ENCODE measurements at regions of chr17 and their contacts with region 1.

Region 1: DNA sequence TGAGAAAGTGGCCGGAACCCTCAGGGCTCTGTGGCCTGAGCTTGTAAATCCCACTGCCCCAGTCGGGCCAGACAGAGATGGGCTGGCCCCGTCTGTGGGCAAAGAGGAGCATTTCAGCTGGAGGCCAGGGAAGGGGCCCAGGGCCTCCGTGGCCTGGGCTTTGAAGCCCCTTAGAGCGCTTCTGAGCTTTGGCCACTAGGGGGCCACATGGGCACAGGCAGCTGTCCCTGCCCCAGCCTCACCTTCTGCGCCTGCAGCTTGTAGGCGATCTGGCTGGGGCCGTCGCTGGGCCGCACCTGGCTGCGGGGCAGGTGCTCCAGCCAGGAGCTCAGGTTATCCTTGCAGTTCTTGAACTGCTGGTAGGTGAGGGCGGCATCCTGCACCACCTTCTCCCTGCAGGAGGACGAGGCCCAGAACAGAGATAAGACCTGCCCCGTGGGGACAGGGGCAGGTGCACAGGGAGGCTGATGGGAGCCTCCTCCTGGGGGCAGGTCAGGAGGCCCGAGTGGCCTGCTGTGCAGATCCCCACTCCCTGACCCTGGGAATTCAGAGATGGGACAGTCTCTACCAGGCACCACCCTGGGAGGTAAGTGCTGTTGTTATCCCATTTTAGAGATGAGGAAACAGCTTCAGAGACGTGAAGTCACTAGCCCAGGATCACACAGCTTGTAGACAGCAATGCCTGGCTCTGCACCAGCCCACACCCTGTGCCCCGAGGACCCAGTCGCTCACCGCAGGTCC is 12.8 kb downstream of the EVPL start:
- DNase-seq: peak; percentile 62 to 85 (median 77)
- ATAC-seq: peak; percentile 96
- H3K4me3 ChIP-seq: no peak overlapping the region
- H3K4me3 Mint-ChIP-seq: peak overlapping the region in 3 of 10 donors; percentile 40 to 68 (median 49)
- H3K27ac ChIP-seq: no peak overlapping the region
- H3K27ac Mint-ChIP-seq: peak overlapping the region in 5 of 9 donors; percentile 33 to 62 (median 40)
- H3K4me1 ChIP-seq: peaks cover 3 to 5% of the 10 kb centered on the region in 2 donors
- H3K4me1 Mint-ChIP-seq: peaks cover 0 to 11% (median 8%) of the 10 kb centered on the region in 7 donors
- H3K27me3 ChIP-seq: no peaks in the 10 kb centered on the region
- H3K27me3 Mint-ChIP-seq: no peaks in the 10 kb centered on the region

Region 2: DNA sequence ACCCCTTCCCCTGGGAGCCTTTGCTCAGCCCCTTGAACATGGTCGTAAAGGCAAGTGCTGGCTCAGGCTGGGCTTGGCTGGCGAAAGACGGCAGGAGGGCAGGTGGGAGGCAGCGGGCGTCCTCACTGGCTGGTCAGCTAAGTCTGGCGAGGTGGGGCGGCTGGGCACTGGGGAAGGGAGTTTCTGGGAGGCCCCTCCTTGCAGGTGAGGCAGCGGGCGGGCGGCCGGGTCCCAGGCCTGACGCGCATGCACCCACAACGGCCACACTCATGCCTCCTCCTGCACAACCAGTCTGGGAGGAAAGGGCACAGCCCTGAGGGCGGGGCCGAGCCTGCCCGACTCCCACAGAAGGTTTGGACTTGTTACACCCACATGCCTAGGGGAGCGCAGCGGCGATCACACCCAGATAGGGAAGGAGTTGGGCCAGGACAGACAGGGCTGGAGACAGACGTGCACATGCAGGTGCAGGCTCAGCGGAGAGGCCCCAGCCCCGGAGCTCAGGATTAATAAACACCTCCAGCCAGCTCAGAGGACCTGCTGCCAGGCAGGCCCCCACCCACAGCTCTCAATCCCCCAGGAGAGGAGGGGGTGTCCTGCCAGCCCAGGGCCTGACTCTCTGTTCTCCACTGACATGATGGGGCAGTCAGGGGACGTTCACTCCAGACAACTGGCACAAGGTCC is 12.9 kb after region 1 on chr17 and contains the start of gene EVPL:
- CTCF ChIA-PET with region 1: interaction called, 12 read pairs
- POLR2A ChIA-PET with region 1: interaction called, 10 read pairs
- intact Hi-C with region 1: loop called in 1 of 2 experiments (anchors 1 kb)
- DNase-seq: no peak
- ATAC-seq: no peak
- H3K4me3 ChIP-seq: no peak within 1 kb of the TSS
- H3K4me3 Mint-ChIP-seq: peak within 1 kb of the TSS in 1 of 10 donors; percentile 84
- H3K27ac ChIP-seq: peak within 1 kb of the TSS; percentile 40
- H3K27ac Mint-ChIP-seq: peak within 1 kb of the TSS in 6 of 9 donors; percentile 25 to 97 (median 80)
- H3K4me1 ChIP-seq: peaks cover 8 to 23% of the 10 kb centered on the region in 2 donors
- H3K4me1 Mint-ChIP-seq: peaks cover 9 to 31% (median 26%) of the 10 kb centered on the region in 7 donors
- H3K27me3 ChIP-seq: no peaks in the 10 kb centered on the region
- H3K27me3 Mint-ChIP-seq: no peaks in the 10 kb centered on the region
- total RNA-seq, gene EVPL: 0.07 to 2.7 (median 0.39) TPM

Region 3: DNA sequence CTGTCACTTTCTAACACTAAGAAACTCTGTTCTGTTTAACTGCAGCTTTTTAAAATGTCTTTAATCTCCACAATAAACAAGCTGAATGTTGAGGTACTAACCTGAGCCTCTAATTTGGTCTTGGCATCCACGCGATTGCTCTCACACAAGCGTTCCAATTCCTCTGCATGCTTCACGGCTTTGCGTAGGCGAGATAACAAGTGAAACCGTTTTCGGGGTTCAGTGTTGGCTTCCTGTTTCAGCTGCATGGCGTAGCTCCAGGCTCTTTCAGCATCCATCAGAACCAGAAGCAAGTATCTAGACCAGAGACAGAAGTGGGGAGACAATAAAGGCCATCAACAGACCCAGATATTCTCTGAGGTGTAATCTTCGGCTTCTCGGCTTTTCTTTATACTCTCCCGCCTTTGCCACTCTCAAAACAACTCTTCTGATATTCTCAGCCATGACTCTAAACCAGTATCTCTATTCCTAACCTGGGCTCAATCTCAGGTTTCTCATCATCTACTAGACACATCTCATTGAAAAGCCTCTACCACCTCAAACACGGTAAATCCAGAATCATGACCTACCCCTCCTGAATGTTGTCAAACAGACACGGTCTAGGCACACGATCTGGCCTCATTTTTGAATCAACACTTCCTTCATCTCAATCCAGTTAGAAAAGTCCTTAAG is 49.7 kb after region 1 on chr17:
- CTCF ChIA-PET with region 1: interaction called, 19 read pairs
- POLR2A ChIA-PET with region 1: interaction called, 5 read pairs
- intact Hi-C with region 1: no loop called
- DNase-seq: peak in 7 of 9 donors; percentile 28 to 76 (median 44)
- ATAC-seq: peak; percentile 95
- H3K4me3 ChIP-seq: no peak overlapping the region
- H3K4me3 Mint-ChIP-seq: peak overlapping the region; percentile 12 to 77 (median 68)
- H3K27ac ChIP-seq: peak overlapping the region; percentile 52
- H3K27ac Mint-ChIP-seq: peak overlapping the region; percentile 82 to 97 (median 91)
- H3K4me1 ChIP-seq: no peaks in the 10 kb centered on the region
- H3K4me1 Mint-ChIP-seq: peaks cover 10 to 30% (median 17%) of the 10 kb centered on the region in 7 donors
- H3K27me3 ChIP-seq: no peaks in the 10 kb centered on the region
- H3K27me3 Mint-ChIP-seq: no peaks in the 10 kb centered on the region

Region 4: GRCh38 chr17:76072148-76072858 is 57.9 kb after region 1 on chr17 and contains the start of gene SRP68:
- CTCF ChIA-PET with region 1: interaction called, 5 read pairs
- POLR2A ChIA-PET with region 1: interaction called, 11 read pairs
- intact Hi-C with region 1: loop called in 1 of 2 experiments (anchors 1 kb)
- DNase-seq: peak; percentile 63 to 86 (median 74)
- ATAC-seq: peak; percentile 92
- H3K4me3 ChIP-seq: peak within 1 kb of the TSS; percentile 89
- H3K4me3 Mint-ChIP-seq: peak within 1 kb of the TSS; percentile 85 to 98 (median 97)
- H3K27ac ChIP-seq: peak within 1 kb of the TSS; percentile 93
- H3K27ac Mint-ChIP-seq: peak within 1 kb of the TSS; percentile 90 to 98 (median 95)
- H3K4me1 ChIP-seq: peaks cover 10 to 37% of the 10 kb centered on the region in 2 donors
- H3K4me1 Mint-ChIP-seq: peaks cover 21 to 62% (median 52%) of the 10 kb centered on the region in 7 donors
- H3K27me3 ChIP-seq: peaks cover 13 to 14% of the 10 kb centered on the region in 2 donors
- H3K27me3 Mint-ChIP-seq: peaks cover 17 to 37% (median 24%) of the 10 kb centered on the region in 5 donors
- total RNA-seq, gene SRP68: 70.8 to 105 (median 91.9) TPM

Region 5: DNA sequence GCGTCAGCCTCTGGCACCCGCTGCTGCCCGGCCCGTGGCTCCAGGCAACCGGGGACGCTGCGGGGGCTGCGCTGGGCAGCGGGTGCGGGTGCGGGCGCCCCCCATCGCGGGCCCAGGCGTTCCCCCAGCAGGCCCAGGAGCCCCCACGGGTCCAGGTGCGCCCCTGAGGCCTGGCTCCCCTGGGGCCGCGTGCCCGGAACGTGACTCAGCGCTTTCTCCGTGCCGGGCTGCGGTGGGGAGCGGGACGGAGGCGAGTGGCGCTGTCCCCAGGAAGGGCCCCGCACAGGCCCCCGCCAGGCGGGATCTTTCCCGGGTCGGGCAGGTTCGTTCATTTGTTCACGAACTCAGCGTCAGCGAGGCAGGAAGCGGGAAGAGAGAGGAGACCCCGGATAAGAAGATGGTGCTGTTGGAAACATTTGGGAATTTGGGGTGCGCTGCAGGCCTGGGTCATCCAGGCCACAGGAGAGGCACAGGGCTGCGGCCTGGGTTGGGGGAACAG is 107.6 kb after region 1 on chr17:
- CTCF ChIA-PET with region 1: interaction called, 8 read pairs
- POLR2A ChIA-PET with region 1: interaction called, 6 read pairs
- intact Hi-C with region 1: loop called in 1 of 2 experiments (anchors 1 kb)
- DNase-seq: no peak
- ATAC-seq: peak; percentile 33
- H3K4me3 ChIP-seq: peak overlapping the region; percentile 63
- H3K4me3 Mint-ChIP-seq: peak overlapping the region in 7 of 10 donors; percentile 25 to 77 (median 53)
- H3K27ac ChIP-seq: peak overlapping the region; percentile 52
- H3K27ac Mint-ChIP-seq: peak overlapping the region; percentile 40 to 91 (median 73)
- H3K4me1 ChIP-seq: peaks cover 0 to 25% of the 10 kb centered on the region in 2 donors
- H3K4me1 Mint-ChIP-seq: peaks cover 10 to 39% (median 27%) of the 10 kb centered on the region in 7 donors
- H3K27me3 ChIP-seq: no peaks in the 10 kb centered on the region
- H3K27me3 Mint-ChIP-seq: no peaks in the 10 kb centered on the region

Region 6: GRCh38 chr17:76296186-76296585 is 281.8 kb after region 1 on chr17:
- CTCF ChIA-PET with region 1: interaction called, 16 read pairs
- POLR2A ChIA-PET with region 1: interaction called, 3 read pairs
- intact Hi-C with region 1: no loop called
- DNase-seq: no peak
- ATAC-seq: no peak
- H3K4me3 ChIP-seq: no peak overlapping the region
- H3K4me3 Mint-ChIP-seq: no peak overlapping the region
- H3K27ac ChIP-seq: no peak overlapping the region
- H3K27ac Mint-ChIP-seq: no peak overlapping the region
- H3K4me1 ChIP-seq: peaks cover 0 to 4% of the 10 kb centered on the region in 2 donors
- H3K4me1 Mint-ChIP-seq: peaks cover 0 to 4% (median 3%) of the 10 kb centered on the region in 7 donors
- H3K27me3 ChIP-seq: no peaks in the 10 kb centered on the region
- H3K27me3 Mint-ChIP-seq: no peaks in the 10 kb centered on the region